T-cell (primary cell): ENCODE measurements at regions of chr20 and their contacts with region 1.

Region 1: GRCh38 chr20:32497589-32498224 is 87.4 kb downstream of the NOL4L start:
- DNase-seq: no peak
- ATAC-seq: no peak
- H3K4me3 ChIP-seq: no peak overlapping the region
- H3K4me3 Mint-ChIP-seq: no peak overlapping the region
- H3K27ac ChIP-seq: no peak overlapping the region
- H3K27ac Mint-ChIP-seq: peak overlapping the region in 1 of 2 donors; percentile 82
- H3K4me1 ChIP-seq: peaks cover 0 to 16% of the 10 kb centered on the region in 2 experiments
- H3K4me1 Mint-ChIP-seq: peaks cover 22 to 55% (median 50%) of the 10 kb centered on the region in 3 donors
- H3K27me3 ChIP-seq: no peaks in the 10 kb centered on the region
- H3K27me3 Mint-ChIP-seq: no peaks in the 10 kb centered on the region

Region 2: DNA sequence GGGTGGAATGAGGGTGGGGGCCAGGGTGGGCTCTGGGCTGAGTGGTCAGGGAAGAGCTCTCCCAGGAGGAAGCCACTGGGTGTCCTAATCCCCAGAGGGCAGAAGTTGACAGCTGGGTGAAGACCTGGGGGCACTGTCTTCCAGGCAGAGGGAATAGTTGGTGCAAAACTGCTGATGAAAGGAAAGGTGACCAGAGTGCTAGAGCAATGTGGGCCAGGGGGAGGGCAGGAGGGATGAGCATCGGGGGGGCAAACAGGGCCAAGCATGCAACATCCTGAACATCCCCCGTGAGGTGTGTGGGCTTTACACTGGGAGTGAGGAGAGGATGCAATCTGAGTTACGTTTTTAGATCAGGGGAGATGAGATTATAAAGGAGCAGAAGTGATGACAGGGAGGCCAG is 10.3 kb before region 1 on chr20:
- CTCF ChIA-PET with region 1: no interaction called
- POLR2A ChIA-PET with region 1: no interaction called
- DNase-seq: no peak
- ATAC-seq: no peak
- H3K4me3 ChIP-seq: no peak overlapping the region
- H3K4me3 Mint-ChIP-seq: no peak overlapping the region
- H3K27ac ChIP-seq: no peak overlapping the region
- H3K27ac Mint-ChIP-seq: peak overlapping the region; percentile 85 to 97
- H3K4me1 ChIP-seq: peaks cover 8 to 32% of the 10 kb centered on the region in 2 experiments
- H3K4me1 Mint-ChIP-seq: peaks cover 46 to 52% (median 48%) of the 10 kb centered on the region in 3 donors
- H3K27me3 ChIP-seq: no peaks in the 10 kb centered on the region
- H3K27me3 Mint-ChIP-seq: no peaks in the 10 kb centered on the region

Region 3: GRCh38 chr20:32507998-32508774 is 10.5 kb after region 1 on chr20:
- CTCF ChIA-PET with region 1: interaction called in 1 of 2 experiments, 4 read pairs
- POLR2A ChIA-PET with region 1: interaction called in 1 of 2 experiments, 13 read pairs
- DNase-seq: peak in 1 of 35 experiments; percentile 17
- ATAC-seq: no peak
- H3K4me3 ChIP-seq: no peak overlapping the region
- H3K4me3 Mint-ChIP-seq: peak overlapping the region in 1 of 3 donors; percentile 93
- H3K27ac ChIP-seq: peak overlapping the region; percentile 76
- H3K27ac Mint-ChIP-seq: peak overlapping the region; percentile 93 to 98
- H3K4me1 ChIP-seq: peaks cover 39 to 59% of the 10 kb centered on the region in 2 experiments
- H3K4me1 Mint-ChIP-seq: peaks cover 71 to 81% (median 79%) of the 10 kb centered on the region in 3 donors
- H3K27me3 ChIP-seq: no peaks in the 10 kb centered on the region
- H3K27me3 Mint-ChIP-seq: no peaks in the 10 kb centered on the region